ENCODE measurements at regions of chr6 and their contacts with region 1.

Region 1: DNA sequence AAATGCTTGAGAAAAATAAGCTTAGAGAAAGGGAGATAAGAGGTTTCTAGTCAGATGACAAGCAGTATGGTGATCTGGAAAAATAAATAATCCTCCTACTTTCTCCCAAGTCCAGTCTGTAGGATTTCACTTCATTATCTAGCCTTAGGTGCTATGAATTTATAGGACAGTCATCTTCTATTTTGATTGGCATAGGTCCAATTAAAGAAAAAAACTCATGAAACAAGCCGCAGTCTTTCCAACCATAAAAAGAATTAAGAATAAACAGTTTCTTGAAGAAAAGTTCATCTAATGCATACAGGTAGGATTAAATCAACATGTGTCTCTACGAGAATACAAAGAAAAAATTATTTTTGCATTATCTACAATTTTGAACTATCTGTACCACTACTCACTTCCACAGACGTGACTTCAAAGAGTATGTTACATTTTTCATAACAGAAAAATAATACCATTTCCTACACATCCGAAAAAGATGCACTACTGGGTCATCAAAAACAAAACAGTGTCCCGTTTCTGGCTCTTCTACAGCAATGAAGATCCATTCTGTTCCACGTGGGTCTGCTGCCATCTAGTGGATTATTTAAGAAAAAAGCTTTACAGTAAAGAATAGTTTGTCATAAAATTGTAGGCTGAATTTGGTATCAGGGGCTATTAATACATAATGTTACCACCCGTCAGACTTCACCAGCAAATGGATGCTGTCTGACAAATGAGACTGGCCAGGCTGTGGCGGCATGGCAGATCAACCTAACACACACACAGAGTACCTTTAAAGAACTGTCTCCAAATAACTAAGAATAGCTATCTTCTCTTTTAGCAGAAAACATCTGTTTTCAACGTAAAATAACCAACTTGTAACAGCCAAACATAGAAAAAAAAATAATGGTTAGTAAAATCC is 28.9 kb downstream of the STX7 start:
- DNase-seq: no peak
- ATAC-seq: peak; percentile 74
- H3K4me3 Mint-ChIP-seq: peak overlapping the region; percentile 61
- H3K27ac Mint-ChIP-seq: peak overlapping the region; percentile 82
- H3K4me1 Mint-ChIP-seq: peaks cover 85% of the 10 kb centered on the region
- H3K27me3 Mint-ChIP-seq: no peaks in the 10 kb centered on the region
- CTCF ChIP-seq: peak; percentile 84

Region 2: DNA sequence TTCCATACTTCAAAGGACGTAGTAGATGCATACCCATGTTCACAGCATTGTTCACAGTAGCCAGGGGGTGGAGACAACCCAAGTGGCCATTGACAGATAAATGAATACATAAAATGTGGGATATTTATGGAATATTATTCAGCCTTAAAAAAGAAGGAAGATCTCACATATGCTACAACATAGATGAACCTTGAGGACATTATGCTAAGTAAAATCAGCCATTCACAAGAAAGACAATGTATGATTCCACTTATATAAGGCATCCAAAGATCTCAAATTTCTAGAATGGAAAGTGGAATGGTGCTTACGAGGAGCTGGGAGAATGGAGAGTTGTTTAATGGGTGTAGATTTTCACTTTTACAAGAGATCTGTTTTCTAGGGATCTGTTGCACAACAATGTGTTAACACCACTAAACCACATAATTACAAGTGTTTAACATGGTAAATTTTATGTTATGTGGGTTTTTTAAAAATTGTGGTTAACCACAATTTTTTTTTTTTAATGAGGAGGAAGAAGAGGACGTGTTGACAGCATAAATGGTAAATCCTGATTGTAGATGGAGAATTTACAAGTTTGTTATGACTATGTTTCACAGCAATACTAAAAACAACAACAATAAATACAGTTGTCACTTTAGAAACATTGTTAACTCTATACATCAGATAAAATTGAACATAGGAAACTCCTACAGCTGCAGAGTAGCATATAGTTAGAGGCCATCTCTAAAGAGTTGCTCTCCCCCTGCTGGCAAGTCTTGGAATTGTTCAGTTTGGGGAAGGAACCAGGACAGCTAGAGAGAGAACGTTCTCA is 574.4 kb before region 1 on chr6:
- CTCF ChIA-PET with region 1: interaction called, 3 read pairs
- POLR2A ChIA-PET with region 1: no interaction called
- intact Hi-C with region 1: loop called (anchors 5 kb)
- DNase-seq: peak; percentile 36
- ATAC-seq: peak; percentile 96
- H3K4me3 Mint-ChIP-seq: no peak overlapping the region
- H3K27ac Mint-ChIP-seq: no peak overlapping the region
- H3K4me1 Mint-ChIP-seq: peaks cover 7% of the 10 kb centered on the region
- H3K27me3 Mint-ChIP-seq: peaks cover 23% of the 10 kb centered on the region
- CTCF ChIP-seq: peak; percentile 95

Region 3: GRCh38 chr6:132354512-132355167 is 129.4 kb before region 1 on chr6:
- CTCF ChIA-PET with region 1: interaction called, 9 read pairs
- POLR2A ChIA-PET with region 1: interaction called, 3 read pairs
- intact Hi-C with region 1: loop called (anchors 2 kb)
- DNase-seq: peak; percentile 80
- ATAC-seq: peak; percentile 92
- H3K4me3 Mint-ChIP-seq: peak overlapping the region; percentile 77
- H3K27ac Mint-ChIP-seq: peak overlapping the region; percentile 92
- H3K4me1 Mint-ChIP-seq: peaks cover 74% of the 10 kb centered on the region
- H3K27me3 Mint-ChIP-seq: no peaks in the 10 kb centered on the region
- CTCF ChIP-seq: no peak

Region 4: GRCh38 chr6:132391391-132392271 is 92.4 kb before region 1 on chr6:
- CTCF ChIA-PET with region 1: interaction called, 21 read pairs
- POLR2A ChIA-PET with region 1: no interaction called
- intact Hi-C with region 1: loop called (anchors 1 kb)
- DNase-seq: no peak
- ATAC-seq: no peak
- H3K4me3 Mint-ChIP-seq: no peak overlapping the region
- H3K27ac Mint-ChIP-seq: no peak overlapping the region
- H3K4me1 Mint-ChIP-seq: peaks cover 29% of the 10 kb centered on the region
- H3K27me3 Mint-ChIP-seq: peaks cover 4% of the 10 kb centered on the region
- CTCF ChIP-seq: no peak

Region 5: DNA sequence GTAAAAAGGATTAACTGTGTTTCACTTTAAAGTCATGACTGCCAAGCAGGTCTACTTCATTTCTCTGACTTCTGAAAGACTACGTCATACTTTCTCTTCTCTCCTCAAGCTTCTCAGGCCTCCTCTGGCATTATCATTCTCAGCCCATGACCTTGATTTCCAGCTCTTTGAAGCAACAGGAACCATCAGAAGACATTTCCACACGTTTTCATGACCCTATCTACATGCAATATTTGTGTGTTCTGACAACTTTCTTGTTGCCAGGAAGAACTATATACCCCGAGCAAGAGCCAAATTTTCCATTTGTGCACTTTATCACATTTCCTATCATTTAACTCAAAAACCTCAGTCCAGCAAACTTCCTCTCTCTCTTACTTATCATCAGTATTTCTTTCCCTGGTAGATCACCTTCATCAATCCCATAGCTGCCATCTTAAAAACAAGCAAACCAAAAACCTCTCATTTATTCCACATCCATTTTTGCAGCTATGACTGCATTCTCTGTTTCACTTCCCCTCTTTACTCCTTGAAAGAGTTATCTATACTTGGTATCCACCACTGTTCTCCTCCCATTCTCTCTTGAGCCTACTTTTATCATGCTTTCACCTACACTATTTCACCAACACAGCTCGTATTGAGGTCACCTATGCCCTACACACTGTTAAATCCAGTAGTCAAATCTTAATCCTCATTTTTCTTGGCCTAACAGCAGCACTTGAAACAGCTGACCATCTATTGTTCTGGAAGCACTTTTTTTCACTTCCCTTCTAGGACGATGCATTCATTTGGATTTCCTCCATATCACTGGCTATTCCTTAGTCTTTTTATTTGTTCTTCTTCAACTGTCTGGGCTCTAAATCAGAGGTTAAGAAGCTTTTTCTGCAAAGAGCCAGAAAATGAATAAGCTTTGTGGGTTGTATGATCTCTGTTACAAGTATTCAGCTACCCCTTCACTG is 18.2 kb before region 1 on chr6:
- CTCF ChIA-PET with region 1: interaction called, 6 read pairs
- POLR2A ChIA-PET with region 1: no interaction called
- intact Hi-C with region 1: loop called (anchors 2 kb)
- DNase-seq: no peak
- ATAC-seq: peak; percentile 83
- H3K4me3 Mint-ChIP-seq: no peak overlapping the region
- H3K27ac Mint-ChIP-seq: no peak overlapping the region
- H3K4me1 Mint-ChIP-seq: peaks cover 8% of the 10 kb centered on the region
- H3K27me3 Mint-ChIP-seq: no peaks in the 10 kb centered on the region
- CTCF ChIP-seq: no peak

Region 6: GRCh38 chr6:132498638-132499037 is 14.6 kb after region 1 on chr6:
- CTCF ChIA-PET with region 1: interaction called, 38 read pairs
- POLR2A ChIA-PET with region 1: interaction called, 12 read pairs
- intact Hi-C with region 1: loop called (anchors 1 kb)
- DNase-seq: no peak
- ATAC-seq: peak; percentile 67
- H3K4me3 Mint-ChIP-seq: peak overlapping the region; percentile 55
- H3K27ac Mint-ChIP-seq: peak overlapping the region; percentile 92
- H3K4me1 Mint-ChIP-seq: peaks cover 90% of the 10 kb centered on the region
- H3K27me3 Mint-ChIP-seq: no peaks in the 10 kb centered on the region
- CTCF ChIP-seq: no peak

Region 7: DNA sequence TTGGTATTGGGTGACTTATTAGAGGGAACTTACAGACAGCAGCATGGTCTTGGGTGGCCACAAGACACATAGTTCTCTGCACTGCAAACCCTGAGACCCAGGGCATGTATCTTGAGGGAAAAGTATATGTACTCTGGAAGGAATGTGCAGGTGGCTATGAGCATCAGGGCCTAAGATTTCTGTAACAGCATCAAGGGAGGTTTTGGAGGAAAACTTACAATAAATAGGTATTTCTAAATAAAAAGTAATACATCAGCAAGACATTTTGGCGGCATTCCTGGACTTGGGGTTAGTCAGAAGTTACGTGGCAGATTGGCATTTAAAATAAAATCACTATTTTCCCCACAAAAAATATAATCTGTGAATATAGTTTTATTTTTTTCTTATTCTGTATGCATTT is 36.9 kb after region 1 on chr6:
- CTCF ChIA-PET with region 1: interaction called, 5 read pairs
- POLR2A ChIA-PET with region 1: no interaction called
- intact Hi-C with region 1: loop called (anchors 5 kb)
- DNase-seq: no peak
- ATAC-seq: no peak
- H3K4me3 Mint-ChIP-seq: no peak overlapping the region
- H3K27ac Mint-ChIP-seq: no peak overlapping the region
- H3K4me1 Mint-ChIP-seq: peaks cover 2% of the 10 kb centered on the region
- H3K27me3 Mint-ChIP-seq: no peaks in the 10 kb centered on the region
- CTCF ChIP-seq: no peak

Measured in activated B cell treated with CpG ODN at 0.5 μM for 24 hours (primary cell).